Activated CD4-positive, alpha-beta T cell treated with anti-CD3 and anti-CD28 coated beads, Interleukin-2, amount 10 ng/mL, durations not matched to agents 24 days and 14 days (primary cell): ENCODE measurements at regions of chr12 and their contacts with region 1.

Region 1: DNA sequence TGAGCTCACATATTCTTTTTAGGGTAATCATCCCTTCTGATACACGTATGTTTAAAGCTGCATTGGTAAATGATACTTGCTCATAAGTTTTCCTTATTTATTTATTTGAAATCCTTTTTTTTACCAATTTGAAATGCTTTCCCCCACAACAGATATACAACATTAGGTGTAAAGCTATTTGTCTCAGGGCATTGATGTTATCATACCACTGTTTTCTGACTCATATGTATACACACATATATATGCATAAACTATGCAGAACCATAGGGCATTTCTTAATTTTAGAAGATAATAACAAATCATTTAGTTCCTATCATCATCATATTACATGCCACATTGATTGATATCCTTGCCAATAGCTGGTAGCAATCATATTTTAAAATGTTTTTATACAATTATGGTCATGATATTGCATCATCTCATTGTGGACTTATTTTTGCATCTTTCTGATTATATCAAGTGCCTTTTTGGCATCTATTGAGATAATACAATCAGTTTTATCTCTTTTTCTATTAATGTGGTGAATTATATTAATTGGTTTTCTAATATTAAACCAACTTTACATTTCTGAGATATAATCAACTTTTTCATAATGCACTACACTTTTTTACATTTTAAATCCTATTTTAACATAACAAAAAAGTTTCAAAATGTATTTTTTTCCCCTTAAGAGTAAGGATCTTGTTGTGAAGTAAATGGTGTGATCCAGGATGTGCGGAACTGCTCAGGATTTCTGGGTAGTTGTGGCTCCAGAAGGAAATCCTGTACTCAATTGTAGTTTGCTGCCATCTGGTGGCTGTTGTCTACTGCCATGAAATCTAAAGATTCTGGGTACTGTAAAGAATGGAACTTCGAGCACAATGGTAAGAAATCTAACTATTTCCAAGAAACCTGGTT is 16.7 kb downstream of the OR9K2 start:
- DNase-seq: peak; percentile 79
- H3K4me3 Mint-ChIP-seq: no peak overlapping the region
- H3K27ac Mint-ChIP-seq: no peak overlapping the region
- H3K4me1 Mint-ChIP-seq: no peaks in the 10 kb centered on the region
- H3K27me3 Mint-ChIP-seq: peaks cover 29% of the 10 kb centered on the region

Region 2: DNA sequence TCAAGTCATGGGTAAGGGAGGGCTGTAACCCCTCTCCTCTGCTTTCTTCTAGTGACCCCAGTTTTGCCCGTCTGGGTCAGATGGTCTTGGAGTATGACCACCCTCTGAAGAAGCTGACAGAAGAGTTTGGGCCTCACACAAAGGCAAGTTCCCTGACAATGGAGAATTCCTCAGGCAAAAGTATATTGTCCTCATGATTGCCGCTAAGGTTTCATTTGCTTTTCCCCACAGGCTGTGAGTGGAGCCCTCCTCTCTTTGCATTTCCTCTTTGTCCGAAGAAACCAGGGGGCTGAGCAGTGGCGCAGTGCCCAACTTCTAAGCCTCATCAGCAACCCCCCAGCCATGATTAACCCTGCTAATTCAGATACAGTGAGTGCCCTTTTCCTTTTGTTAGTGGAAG is 633.3 kb before region 1 on chr12:
- intact Hi-C with region 1: no loop called
- DNase-seq: no peak
- H3K4me3 Mint-ChIP-seq: no peak overlapping the region
- H3K27ac Mint-ChIP-seq: no peak overlapping the region
- H3K4me1 Mint-ChIP-seq: peaks cover 10% of the 10 kb centered on the region
- H3K27me3 Mint-ChIP-seq: no peaks in the 10 kb centered on the region

Region 3: DNA sequence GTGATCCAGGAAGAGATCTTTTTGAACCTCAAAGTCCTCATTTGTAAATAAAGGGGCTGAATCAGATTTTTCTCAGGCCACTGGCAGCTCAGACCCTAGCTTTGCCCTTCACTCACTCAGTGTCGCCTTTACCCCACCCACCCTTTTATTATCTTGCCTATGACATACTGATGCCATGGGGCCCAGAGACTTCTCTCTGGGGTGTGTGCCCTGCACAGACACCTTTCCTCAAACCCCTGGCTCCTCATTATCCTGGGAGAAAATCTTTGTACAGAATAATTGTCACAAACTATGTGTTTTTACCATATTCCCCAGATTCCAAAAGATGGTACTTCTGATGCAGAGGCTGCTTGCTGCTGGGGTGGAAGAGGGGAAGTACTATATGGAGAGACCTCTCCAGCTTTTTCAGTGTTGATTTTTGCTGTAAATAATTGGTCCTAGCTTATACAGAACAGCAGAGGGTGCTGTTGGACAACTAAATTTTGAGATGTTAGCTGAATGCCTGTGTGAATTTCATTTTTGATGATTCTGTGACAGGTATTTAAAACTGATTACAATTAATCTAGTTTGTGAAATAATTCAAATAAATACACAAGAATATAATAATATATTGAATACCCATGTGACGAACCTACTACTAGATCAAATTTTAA is 440.9 kb before region 1 on chr12:
- intact Hi-C with region 1: loop called (anchors 5 kb)
- DNase-seq: peak; percentile 79
- H3K4me3 Mint-ChIP-seq: no peak overlapping the region
- H3K27ac Mint-ChIP-seq: no peak overlapping the region
- H3K4me1 Mint-ChIP-seq: no peaks in the 10 kb centered on the region
- H3K27me3 Mint-ChIP-seq: peaks cover 20% of the 10 kb centered on the region

Region 4: DNA sequence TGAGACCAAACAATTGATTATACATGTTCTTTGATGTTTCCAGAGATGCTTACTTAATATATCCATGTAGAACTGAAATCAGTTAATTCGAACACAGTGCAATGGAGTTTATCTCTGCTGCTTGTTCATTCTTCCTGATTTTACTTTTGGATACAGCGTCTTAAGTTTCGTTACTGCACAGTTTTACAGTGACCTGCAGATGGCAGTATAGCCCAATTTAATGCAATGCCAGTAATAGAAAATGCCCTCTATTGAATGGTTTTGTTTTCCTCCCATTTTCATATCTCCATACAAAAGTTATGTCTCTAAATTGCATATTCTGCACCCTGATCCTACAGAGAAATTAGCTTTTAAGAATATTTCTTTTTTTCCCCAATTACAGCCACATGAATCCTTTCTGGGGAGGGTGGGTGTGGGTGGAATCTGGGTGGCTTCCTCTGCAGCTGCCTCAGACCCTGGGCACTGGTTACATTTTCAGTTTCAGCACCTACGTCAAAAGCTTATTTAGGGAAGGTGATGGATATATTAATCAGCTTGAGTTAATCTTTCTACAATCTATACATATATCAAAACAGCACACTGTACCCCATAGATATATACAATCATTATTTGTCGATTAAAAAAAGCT is 393.6 kb before region 1 on chr12:
- intact Hi-C with region 1: loop called (anchors 1 kb)
- DNase-seq: peak; percentile 84
- H3K4me3 Mint-ChIP-seq: peak overlapping the region; percentile 41
- H3K27ac Mint-ChIP-seq: no peak overlapping the region
- H3K4me1 Mint-ChIP-seq: peaks cover 16% of the 10 kb centered on the region
- H3K27me3 Mint-ChIP-seq: peaks cover 20% of the 10 kb centered on the region